HEK293T (cell line): ENCODE measurements at regions of chr15 and their contacts with region 1.

Region 1: GRCh38 chr15:33086507-33087121 is 107.9 kb downstream of the FMN1 start:
- DNase-seq: peak; percentile 16

Region 2: GRCh38 chr15:33132722-33133345 is 46.2 kb after region 1 on chr15:
- CTCF ChIA-PET with region 1: interaction called, 14 read pairs
- POLR2A ChIA-PET with region 1: no interaction called
- DNase-seq: peak; percentile 55